ENCODE measurements at regions of chr6 and their contacts with region 1.

Region 1: GRCh38 chr6:52407467-52407866 is 12.7 kb upstream of the EFHC1 start:
- DNase-seq: peak; percentile 17 to 62
- H3K4me3 ChIP-seq: no peak overlapping the region
- H3K27ac ChIP-seq: no peak overlapping the region
- H3K4me1 ChIP-seq: no peaks in the 10 kb centered on the region
- H3K27me3 ChIP-seq: no peaks in the 10 kb centered on the region
- CTCF ChIP-seq: peak; percentile 77

Region 2: DNA sequence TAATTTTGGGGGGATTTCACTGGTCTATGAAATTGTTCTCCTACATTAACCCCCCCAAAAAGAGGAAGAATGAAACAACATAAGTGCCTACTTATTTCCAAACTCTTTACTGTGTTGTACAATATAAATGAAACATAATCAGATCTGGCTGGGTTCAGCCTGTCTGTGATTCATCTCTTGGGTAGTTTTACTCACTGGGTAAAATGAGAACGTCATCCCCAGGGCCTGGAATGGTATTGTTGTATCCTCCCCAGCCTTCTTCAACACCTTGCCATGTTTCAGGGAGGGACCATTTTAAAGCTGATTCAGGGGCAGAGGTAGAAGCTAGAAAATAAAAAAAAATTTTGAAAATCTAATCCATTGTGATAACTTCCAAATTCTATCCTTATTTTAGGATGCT is 576.8 kb before region 1 on chr6:
- CTCF ChIA-PET with region 1: no interaction called
- POLR2A ChIA-PET with region 1: no interaction called
- intact Hi-C with region 1: no loop called
- DNase-seq: no peak
- H3K4me3 ChIP-seq: no peak overlapping the region
- H3K27ac ChIP-seq: no peak overlapping the region
- H3K4me1 ChIP-seq: no peaks in the 10 kb centered on the region
- H3K27me3 ChIP-seq: no peaks in the 10 kb centered on the region
- CTCF ChIP-seq: no peak

Region 3: DNA sequence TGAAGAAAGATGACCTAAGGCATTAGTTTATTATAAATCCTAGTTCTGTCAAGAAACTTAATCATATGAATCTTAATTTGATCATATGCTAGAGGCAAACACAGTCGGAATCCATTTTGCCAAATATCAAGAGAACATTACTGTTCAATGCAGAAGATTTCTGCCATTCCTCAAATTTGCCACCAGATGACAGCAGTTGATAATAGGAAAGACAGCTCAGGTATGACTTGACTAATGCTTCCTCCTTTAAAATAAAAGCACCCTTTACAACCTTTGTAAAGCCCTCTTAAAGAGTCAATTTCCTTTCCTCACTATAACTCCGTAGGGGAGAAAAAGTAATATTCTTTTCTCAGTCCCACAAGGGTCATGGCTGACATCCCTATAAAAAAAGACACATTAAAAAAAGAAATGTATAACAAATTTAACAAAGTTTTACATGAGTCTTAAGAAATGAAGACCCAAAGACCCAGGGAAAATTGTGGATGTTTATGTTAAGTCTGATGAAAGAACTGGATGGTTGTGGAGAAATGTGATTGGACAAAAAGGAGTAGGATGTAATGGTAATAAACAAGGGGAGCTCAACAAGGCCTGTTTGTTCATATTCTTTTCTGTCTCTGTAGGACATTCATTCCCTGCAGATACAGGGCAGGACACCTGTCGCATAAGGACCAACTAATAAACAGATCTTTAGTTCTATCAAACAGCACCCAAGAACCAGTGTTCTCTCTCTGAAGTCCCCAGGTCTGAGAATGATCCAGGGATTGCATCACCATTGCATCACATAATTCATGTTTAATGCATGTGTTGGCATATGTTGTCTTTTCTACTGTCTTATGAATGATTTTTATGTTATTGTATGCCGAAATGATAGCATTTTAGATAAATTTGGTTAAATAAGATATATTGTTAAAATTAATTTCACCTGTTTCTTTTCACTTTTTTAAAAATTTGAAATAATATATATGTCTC is 244.2 kb before region 1 on chr6:
- CTCF ChIA-PET with region 1: no interaction called
- POLR2A ChIA-PET with region 1: no interaction called
- intact Hi-C with region 1: loop called (anchors 2 kb)
- DNase-seq: no peak
- H3K4me3 ChIP-seq: no peak overlapping the region
- H3K27ac ChIP-seq: no peak overlapping the region
- H3K4me1 ChIP-seq: no peaks in the 10 kb centered on the region
- H3K27me3 ChIP-seq: 0 out of 2 replicates have a peak, but pooled peaks cover 4% of the 10 kb centered on the region
- CTCF ChIP-seq: peak; percentile 70

Region 4: GRCh38 chr6:52195886-52196285 is 211.6 kb before region 1 on chr6:
- CTCF ChIA-PET with region 1: interaction called, 14 read pairs
- POLR2A ChIA-PET with region 1: no interaction called
- intact Hi-C with region 1: no loop called
- DNase-seq: no peak
- H3K4me3 ChIP-seq: no peak overlapping the region
- H3K27ac ChIP-seq: no peak overlapping the region
- H3K4me1 ChIP-seq: no peaks in the 10 kb centered on the region
- H3K27me3 ChIP-seq: peaks cover 3% of the 10 kb centered on the region; the same call in 1 of the 2 replicates
- CTCF ChIP-seq: no peak

Region 5: GRCh38 chr6:52330470-52330869 is 77.0 kb before region 1 on chr6:
- CTCF ChIA-PET with region 1: no interaction called
- POLR2A ChIA-PET with region 1: interaction called, 17 read pairs
- intact Hi-C with region 1: no loop called
- DNase-seq: peak in 1 of 2 experiments; percentile 45
- H3K4me3 ChIP-seq: no peak overlapping the region
- H3K27ac ChIP-seq: no peak overlapping the region
- H3K4me1 ChIP-seq: peaks cover 23% of the 10 kb centered on the region
- H3K27me3 ChIP-seq: no peaks in the 10 kb centered on the region
- CTCF ChIP-seq: no peak

Region 6: GRCh38 chr6:52505726-52506409 is 98.4 kb after region 1 on chr6:
- CTCF ChIA-PET with region 1: no interaction called
- POLR2A ChIA-PET with region 1: no interaction called
- intact Hi-C with region 1: no loop called
- DNase-seq: no peak
- H3K4me3 ChIP-seq: no peak overlapping the region
- H3K27ac ChIP-seq: no peak overlapping the region
- H3K4me1 ChIP-seq: peaks cover 41% of the 10 kb centered on the region
- H3K27me3 ChIP-seq: no peaks in the 10 kb centered on the region
- CTCF ChIP-seq: no peak

Region 7: GRCh38 chr6:53484476-53485280 is 1077.2 kb after region 1 on chr6:
- CTCF ChIA-PET with region 1: no interaction called
- POLR2A ChIA-PET with region 1: no interaction called
- intact Hi-C with region 1: loop called (anchors 2 kb)
- DNase-seq: peak in 1 of 2 experiments; percentile 42
- H3K4me3 ChIP-seq: no peak overlapping the region
- H3K27ac ChIP-seq: no peak overlapping the region
- H3K4me1 ChIP-seq: no peaks in the 10 kb centered on the region
- H3K27me3 ChIP-seq: no peaks in the 10 kb centered on the region
- CTCF ChIP-seq: peak; percentile 98